AG04449 (cell line): ENCODE measurements at regions of chr14 and their contacts with region 1.

Region 1: GRCh38 chr14:64986578-64987571 is at the start of gene FNTB:
- DNase-seq: peak; percentile 88
- H3K4me3 ChIP-seq: peak within 1 kb of the TSS; percentile 75
- CTCF ChIP-seq: peak; percentile 89

Region 2: GRCh38 chr14:64971943-64972791 is 14.7 kb before region 1 on chr14 and contains the start of gene RAB15:
- CTCF ChIA-PET with region 1: interaction called, 111 read pairs
- POLR2A ChIA-PET with region 1: interaction called, 6 read pairs
- DNase-seq: no peak
- H3K4me3 ChIP-seq: peak within 1 kb of the TSS; percentile 76
- CTCF ChIP-seq: no peak

Region 3: DNA sequence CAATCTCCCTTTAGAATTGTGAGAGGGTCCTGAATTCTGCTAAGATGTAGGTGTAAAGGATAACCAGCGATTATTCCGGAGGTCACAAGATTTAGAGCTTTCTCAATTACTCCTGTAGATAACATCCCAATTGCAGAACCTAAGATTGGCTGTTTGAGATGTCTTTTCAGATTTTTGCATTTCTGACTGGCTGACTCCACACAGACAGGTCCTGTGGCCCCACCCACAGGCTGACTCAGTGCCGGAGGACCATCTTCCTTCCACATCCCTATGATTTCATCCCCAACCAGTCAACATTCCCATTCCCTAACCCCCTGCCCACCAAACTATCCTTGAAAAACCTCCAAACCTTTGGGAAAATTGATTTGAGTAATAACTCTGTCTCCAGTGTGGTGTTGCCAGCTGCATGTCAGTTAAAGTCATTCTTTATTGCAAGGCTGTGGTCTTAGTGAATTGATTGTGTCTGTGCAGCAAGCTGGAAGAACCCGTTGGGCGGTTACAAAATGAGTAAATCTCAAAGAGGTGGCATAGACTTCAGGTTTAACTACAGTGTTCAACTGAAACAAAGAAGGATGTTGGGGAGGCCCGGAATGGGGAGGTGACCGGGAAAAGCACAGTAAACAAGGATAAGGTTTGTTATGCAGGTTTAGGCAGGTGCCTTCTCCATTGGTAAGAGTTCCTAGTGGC is 10.4 kb after region 1 on chr14:
- CTCF ChIA-PET with region 1: interaction called, 186 read pairs
- POLR2A ChIA-PET with region 1: interaction called, 11 read pairs
- DNase-seq: no peak
- H3K4me3 ChIP-seq: no peak overlapping the region
- CTCF ChIP-seq: no peak

Region 4: DNA sequence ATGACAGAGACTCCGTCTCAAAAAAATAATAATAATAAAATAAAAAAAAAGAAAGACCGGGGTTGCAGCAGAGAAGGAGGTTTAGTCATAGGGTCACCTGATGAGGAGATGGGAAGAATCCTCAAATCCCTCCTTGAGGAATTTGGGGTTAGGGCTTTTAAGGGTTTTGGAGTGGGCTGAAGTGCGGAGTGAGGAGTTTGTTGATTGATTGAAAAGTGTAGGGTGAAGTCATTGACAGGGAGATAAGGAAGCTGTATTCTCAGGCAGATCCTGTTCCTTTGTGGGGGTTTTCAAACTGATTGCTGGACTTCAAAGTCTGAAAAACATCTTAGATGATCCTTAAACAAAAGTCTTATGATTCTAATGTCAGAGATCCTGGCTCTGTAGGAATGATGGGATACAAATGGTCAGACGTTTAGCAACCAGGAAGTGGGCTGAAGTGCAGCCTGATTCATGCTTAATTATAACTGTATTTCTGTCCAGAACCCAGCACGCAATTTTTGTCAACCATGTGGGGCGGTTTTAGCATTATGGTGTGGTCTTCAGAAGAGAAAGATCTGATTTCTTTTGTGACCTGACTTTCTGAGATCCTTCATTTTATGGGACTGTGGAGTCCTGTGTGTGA is 15.8 kb after region 1 on chr14:
- CTCF ChIA-PET with region 1: interaction called, 186 read pairs
- POLR2A ChIA-PET with region 1: interaction called, 11 read pairs
- DNase-seq: no peak
- H3K4me3 ChIP-seq: no peak overlapping the region
- CTCF ChIP-seq: no peak